ENCODE measurements at regions of chr20 and their contacts with region 1.

Region 1: DNA sequence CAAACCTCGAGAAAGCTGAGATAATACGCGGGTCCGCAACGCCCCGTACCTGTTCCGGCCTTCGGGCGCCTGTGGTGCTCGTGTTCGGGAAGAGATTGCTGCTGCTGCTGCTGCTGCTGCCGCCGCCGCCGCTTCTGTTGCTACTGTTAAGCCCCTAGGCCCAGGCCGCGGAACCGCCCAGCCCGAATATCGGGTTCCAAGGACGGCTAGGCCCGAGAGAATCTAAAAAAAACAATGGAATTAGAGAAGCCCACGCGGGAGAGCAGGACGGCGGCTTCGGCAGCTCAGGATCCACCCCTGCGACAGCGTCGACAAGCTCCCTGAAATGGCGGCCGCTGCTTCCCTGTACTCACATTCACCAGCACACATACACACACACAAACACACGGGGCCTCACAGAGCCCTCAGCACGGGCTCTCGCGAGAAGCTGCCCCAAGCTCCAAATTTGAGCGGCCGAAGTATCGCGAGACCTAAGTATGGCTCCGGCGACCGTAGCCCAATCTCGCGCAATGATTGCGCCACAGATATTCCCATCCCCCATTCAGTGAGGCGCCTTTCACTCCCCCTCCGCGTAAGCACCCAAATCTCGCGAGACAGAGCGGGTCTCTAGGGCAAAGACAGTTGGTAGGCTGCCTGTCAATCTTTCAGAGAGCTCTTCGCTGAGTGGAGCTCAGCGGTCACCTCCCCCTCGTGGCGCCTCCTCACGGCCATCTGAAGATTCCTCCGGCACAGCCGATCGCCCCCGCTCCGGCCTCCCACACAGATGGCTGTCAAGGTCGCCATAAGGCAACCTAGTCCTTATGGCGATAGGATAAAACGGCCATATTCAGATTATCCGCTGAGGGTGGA is at the start of gene RBM39:
- DNase-seq: peak; percentile 100
- H3K4me3 ChIP-seq: peak within 1 kb of the TSS; percentile 83 to 91 (median 84)
- H3K27ac ChIP-seq: peak within 1 kb of the TSS; percentile 99 to 100 (median 100)
- H3K4me1 ChIP-seq: peaks cover 38 to 51% (median 47%) of the 10 kb centered on the region in 4 donors
- H3K27me3 ChIP-seq: no peaks in the 10 kb centered on the region
- CTCF ChIP-seq: peak; percentile 38 to 57 (median 44)
- EP300 ChIP-seq: no peak
- POLR2A ChIP-seq: peak; percentile 97
- total RNA-seq, gene RBM39: 143 to 272 (median 165) TPM

Region 2: GRCh38 chr20:35443003-35443402 is 299.1 kb before region 1 on chr20:
- intact Hi-C with region 1: no loop called
- DNase-seq: no peak
- H3K4me3 ChIP-seq: no peak overlapping the region
- H3K27ac ChIP-seq: no peak overlapping the region
- H3K4me1 ChIP-seq: peaks cover 3 to 22% (median 21%) of the 10 kb centered on the region in 4 donors
- H3K27me3 ChIP-seq: peaks cover 0 to 11% (median 0%) of the 10 kb centered on the region in 4 donors
- CTCF ChIP-seq: no peak
- EP300 ChIP-seq: no peak
- POLR2A ChIP-seq: no peak

Region 3: GRCh38 chr20:35771689-35772562 is 29.8 kb after region 1 on chr20 and contains the start of gene PHF20:
- intact Hi-C with region 1: loop called (anchors 2 kb)
- DNase-seq: peak; percentile 100
- H3K4me3 ChIP-seq: peak within 1 kb of the TSS; percentile 64 to 82 (median 69)
- H3K27ac ChIP-seq: peak within 1 kb of the TSS; percentile 84 to 95 (median 92)
- H3K4me1 ChIP-seq: peaks cover 63 to 86% (median 76%) of the 10 kb centered on the region in 4 donors
- H3K27me3 ChIP-seq: no peaks in the 10 kb centered on the region
- CTCF ChIP-seq: peak in 2 of 3 experiments; percentile 17 to 23
- EP300 ChIP-seq: peak; percentile 95
- POLR2A ChIP-seq: peak; percentile 3
- total RNA-seq, gene PHF20: 45.9 to 62.2 (median 48.0) TPM

Region 4: GRCh38 chr20:35821807-35822242 is 79.7 kb after region 1 on chr20:
- intact Hi-C with region 1: no loop called
- DNase-seq: no peak
- H3K4me3 ChIP-seq: no peak overlapping the region
- H3K27ac ChIP-seq: no peak overlapping the region
- H3K4me1 ChIP-seq: peaks cover 6 to 25% (median 19%) of the 10 kb centered on the region in 4 donors
- H3K27me3 ChIP-seq: no peaks in the 10 kb centered on the region
- CTCF ChIP-seq: no peak
- EP300 ChIP-seq: no peak
- POLR2A ChIP-seq: no peak

Region 5: DNA sequence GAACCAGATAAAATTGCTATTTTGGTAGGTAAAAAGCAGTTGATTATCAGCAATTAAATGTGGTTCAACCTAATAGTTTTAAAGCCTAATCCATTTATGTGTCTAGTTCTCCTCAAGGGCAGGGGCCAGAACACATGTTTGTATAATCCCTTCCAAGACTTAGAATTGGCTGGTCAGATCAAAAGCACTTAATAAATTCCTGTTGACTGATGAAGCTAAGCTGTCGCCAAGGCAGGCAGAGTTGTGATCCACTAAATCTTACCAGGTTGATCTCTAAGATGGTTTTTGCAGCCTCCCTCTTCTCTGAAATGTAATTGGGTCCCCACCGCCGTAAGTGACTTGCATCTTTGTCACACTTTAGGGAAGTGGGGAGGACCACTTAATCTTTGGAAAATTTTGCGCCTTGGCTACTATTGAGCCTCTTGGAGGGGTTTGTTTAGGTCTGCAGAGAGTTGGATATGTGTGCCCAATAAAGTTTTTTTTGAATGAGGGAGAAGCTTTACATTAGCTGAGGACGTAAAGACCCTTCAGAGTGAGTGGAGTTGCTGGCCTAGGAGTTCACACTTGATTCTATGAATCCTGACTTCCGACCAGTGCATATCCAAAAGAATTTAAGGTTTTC is 95.6 kb after region 1 on chr20:
- intact Hi-C with region 1: no loop called
- DNase-seq: no peak
- H3K4me3 ChIP-seq: no peak overlapping the region
- H3K27ac ChIP-seq: no peak overlapping the region
- H3K4me1 ChIP-seq: peaks cover 0 to 14% (median 12%) of the 10 kb centered on the region in 4 donors
- H3K27me3 ChIP-seq: no peaks in the 10 kb centered on the region
- CTCF ChIP-seq: no peak
- EP300 ChIP-seq: no peak
- POLR2A ChIP-seq: no peak

Region 6: DNA sequence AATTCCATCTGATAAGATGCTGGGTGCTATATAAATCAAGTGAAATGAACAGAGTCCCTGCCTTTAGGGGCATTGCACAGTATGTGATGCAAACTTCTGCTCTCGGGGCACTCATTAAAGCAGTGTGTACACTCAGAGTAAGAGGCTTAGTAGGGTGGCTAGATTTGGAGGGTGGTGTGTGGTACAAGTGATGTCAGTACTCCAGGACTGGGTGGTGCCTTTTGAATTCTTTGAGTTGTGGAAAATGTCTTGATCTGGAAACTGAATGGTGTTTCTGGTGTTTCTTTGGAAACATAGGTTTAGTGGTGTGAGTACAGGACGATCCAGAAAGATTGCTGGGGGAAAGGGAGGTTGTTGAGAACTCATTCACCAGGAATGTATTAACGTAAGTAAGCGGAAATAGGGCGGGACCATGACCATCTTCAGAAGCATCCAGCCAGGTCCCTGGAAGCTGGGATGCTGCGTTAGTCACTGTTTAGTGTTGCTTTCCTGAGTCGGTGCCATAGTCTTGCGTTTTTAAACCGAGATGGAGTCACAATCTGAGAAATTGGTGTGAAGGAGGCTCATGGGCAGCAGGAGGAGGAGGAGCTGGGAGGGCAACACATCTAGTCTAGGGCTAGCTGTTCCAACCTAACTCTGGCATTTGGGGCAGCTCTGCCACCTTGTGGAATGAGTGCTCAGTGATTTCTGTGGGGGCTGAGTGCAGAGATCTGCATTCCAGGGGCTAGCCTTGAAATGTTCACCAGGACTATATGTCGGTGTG is 141.8 kb after region 1 on chr20:
- intact Hi-C with region 1: loop called (anchors 5 kb)
- DNase-seq: no peak
- H3K4me3 ChIP-seq: peak overlapping the region in 3 of 4 donors; percentile 29 to 42 (median 32)
- H3K27ac ChIP-seq: peak overlapping the region; percentile 73 to 87 (median 78)
- H3K4me1 ChIP-seq: peaks cover 5 to 27% (median 24%) of the 10 kb centered on the region in 4 donors
- H3K27me3 ChIP-seq: no peaks in the 10 kb centered on the region
- CTCF ChIP-seq: peak; percentile 76 to 82 (median 79)
- EP300 ChIP-seq: no peak
- POLR2A ChIP-seq: no peak

Measured in esophagus muscularis mucosa (tissue), 4 donors.